ENCODE measurements at regions of chr5 and their contacts with region 1.

Region 1: GRCh38 chr5:177390363-177391300 is 6.4 kb downstream of the SLC34A1 start:
- DNase-seq: peak; percentile 69 to 84 (median 81)
- H3K4me3 ChIP-seq: no peak overlapping the region
- H3K27ac ChIP-seq: no peak overlapping the region
- H3K4me1 ChIP-seq: no peaks in the 10 kb centered on the region
- H3K27me3 ChIP-seq: no peaks in the 10 kb centered on the region
- CTCF ChIP-seq: peak; percentile 93 to 97 (median 95)
- EP300 ChIP-seq: no peak
- POLR2A ChIP-seq: no peak

Region 2: DNA sequence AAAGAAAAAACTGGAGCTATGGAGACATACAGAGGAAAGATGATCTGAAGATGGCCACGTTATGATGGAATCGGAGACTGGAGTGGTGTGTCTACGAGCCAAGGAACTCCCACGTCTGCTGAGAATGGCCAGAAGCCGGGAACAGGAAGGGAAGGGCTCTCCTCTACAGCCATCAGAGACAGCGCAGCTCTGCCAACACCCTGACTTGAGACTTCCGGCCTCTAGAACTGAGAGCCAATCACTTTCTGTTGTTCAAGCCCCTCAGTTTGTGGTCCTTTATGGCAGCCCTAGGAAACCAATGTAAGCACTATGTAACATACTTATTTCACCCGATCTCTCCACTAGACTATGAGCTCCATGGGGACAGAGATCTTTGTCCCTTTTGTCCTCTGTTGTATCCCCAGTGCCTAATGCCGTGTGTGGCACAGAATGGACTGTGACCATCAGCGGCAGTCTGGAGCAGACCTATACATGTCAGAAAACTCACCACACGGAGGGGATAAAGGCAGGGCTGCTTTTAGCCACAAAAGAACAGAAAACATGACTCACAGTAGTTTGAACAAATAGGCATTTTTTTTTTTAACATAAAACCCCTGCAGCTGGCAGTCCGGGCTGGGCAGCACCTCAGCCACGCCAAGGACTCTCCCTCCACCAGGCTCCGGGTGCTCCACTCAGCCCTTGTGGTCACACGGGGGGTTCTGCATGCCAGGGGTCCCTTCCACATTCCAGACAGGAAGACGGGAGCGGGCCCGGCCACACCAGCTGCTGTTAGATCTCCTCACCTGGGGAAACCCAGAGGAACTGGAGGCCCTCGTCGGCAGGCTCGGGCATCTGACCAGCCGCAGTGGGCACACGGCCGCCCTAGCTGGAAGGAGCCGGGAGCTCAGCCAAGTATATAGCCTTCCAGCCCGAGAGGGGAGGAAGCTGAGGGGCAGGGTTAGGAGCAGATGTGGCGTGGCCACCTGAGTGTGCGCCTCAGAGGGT is 62.8 kb before region 1 on chr5:
- intact Hi-C with region 1: no loop called
- DNase-seq: peak in 1 of 5 donors; percentile 21
- H3K4me3 ChIP-seq: no peak overlapping the region
- H3K27ac ChIP-seq: no peak overlapping the region
- H3K4me1 ChIP-seq: no peaks in the 10 kb centered on the region
- H3K27me3 ChIP-seq: no peaks in the 10 kb centered on the region
- CTCF ChIP-seq: no peak
- EP300 ChIP-seq: no peak
- POLR2A ChIP-seq: no peak

Region 3: DNA sequence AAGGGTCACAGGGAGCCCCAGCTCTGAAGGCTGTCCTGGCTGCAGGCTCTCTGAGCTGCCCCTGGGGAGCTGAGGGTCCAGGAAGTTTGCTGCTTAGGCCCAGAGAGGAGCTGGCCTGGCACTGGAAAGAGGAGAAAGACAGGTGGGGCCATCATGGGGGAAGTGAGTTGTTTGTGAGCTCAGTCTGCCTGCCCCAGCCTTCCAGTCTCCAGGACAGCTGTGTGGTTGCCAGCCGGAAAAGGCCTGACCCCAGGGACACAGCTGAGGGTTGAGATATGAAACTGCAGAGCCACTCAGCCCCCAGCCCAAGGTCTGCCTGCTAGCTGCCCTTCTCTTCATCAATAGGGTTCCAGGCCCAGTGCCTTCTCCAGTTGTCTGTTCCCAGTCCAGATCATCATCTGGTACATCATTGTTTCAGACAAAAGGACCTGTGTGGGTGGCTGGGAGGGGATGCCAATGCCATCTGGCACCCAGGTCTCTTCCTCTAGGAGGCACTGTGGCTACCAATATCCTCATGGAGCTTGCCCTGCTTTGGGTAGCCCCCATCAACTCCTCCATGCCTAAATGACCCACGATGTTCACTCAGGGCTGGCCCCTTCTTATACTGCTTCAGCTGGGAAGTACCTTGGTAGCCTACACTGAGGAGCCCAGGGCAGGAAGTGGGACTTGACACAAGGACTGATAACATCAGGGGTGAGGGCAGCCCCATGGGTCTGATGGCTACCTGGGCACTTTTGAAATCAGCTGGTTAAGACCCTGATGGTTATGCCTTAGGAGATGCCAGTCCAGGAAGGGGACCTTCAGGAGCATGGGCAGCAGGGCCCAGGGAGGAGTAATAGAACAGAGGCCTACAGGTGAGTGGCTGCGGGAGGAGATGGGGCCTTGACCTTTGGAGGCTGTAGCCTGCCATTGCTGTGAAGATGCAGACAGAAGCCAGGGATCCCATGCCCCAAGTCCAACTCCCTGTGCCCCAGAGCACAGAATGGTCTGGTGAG is 130.6 kb after region 1 on chr5:
- intact Hi-C with region 1: no loop called
- DNase-seq: no peak
- H3K4me3 ChIP-seq: no peak overlapping the region
- H3K27ac ChIP-seq: no peak overlapping the region
- H3K4me1 ChIP-seq: peaks cover 1% of the 10 kb centered on the region
- H3K27me3 ChIP-seq: no peaks in the 10 kb centered on the region
- CTCF ChIP-seq: no peak
- EP300 ChIP-seq: no peak
- POLR2A ChIP-seq: no peak

Region 4: DNA sequence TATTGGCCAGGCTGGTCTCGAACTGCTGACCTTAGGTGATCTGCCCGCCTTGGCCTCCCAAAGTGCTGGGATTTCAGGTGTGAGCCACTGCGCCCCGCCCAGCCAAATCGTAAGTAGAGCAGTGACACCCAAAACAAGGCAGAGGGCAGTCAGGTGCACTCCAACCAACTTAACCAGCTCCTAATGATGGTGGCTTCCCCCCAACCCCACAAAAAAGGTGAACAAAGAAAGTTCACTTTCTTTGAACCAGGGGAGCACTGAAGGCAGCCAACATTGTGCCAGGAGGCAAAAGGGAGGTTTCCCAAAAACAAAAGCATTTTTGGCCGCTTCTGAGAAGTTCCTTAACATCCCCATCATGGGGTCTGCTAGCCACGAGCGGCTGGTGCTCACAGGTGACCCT is 786.9 kb after region 1 on chr5:
- intact Hi-C with region 1: loop called in 1 of 4 experiments (anchors 10 kb)
- DNase-seq: no peak
- H3K4me3 ChIP-seq: no peak overlapping the region
- H3K27ac ChIP-seq: no peak overlapping the region
- H3K4me1 ChIP-seq: no peaks in the 10 kb centered on the region
- H3K27me3 ChIP-seq: no peaks in the 10 kb centered on the region
- CTCF ChIP-seq: no peak
- EP300 ChIP-seq: no peak
- POLR2A ChIP-seq: no peak